ENCODE measurements at regions of chr5 and their contacts with region 1.

Region 1: DNA sequence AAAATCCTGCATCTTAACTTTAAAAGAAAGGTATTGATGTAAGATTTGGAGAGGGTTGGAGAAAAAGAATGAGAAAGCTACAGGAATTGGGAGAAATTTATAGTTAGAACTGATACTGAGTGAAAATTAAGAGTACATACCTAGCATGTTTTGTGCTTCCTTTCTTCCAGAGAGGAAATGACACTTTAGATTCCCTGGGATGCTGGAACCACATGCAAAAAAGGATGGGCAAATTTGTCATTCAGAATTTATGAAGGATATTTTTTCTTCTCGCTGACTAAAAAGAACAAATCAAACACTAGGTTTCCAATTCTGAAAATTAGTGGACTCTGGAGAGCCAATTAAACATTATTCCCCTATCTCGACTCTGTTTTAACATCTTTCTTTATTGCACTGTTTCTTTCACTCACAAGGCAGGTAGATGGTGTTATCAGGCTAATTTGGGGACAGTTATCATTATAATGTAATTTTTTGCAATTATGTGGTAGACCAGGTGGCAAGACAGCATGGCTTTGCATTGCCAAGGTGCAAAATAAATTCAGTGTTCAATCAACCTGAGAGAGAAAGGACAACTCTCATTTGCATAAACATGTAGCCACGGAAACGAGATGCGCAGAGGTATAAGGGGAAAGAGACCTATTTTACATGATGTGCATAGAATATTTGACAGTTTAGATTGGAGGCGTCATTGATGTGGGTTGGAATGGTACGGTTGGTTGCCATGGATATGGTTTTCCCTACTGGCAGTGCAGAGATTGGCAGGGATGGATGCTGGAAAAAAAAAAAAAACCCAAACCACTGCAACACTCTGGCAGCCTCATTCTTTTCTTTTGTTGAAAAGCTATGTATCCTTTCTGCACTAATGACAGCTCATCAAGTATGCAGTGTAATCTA is 320.4 kb upstream of the CCNH start:
- DNase-seq: no peak
- ATAC-seq: no peak
- H3K4me3 ChIP-seq: no peak overlapping the region
- H3K27ac ChIP-seq: no peak overlapping the region
- H3K4me1 ChIP-seq: no peaks in the 10 kb centered on the region
- H3K27me3 ChIP-seq: no peaks in the 10 kb centered on the region
- CTCF ChIP-seq: no peak

Region 2: DNA sequence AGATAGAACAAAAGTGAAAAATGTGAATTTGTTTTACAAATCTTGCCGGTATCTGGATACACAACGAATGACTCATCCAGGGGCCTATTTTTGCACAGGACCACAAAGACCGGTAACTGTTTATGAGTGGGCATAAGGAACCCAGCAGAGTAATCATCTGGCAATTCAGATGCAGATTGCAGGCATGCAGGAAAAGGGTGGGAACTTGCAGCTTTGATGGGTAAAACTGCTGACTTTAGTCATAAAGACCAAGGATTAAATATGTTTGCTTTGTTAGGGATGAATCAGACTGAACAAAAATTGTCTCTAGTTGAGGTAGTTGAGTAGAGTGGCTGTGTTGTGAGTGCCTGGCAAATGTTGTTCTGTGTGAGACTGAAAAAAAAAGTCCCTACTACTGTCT is 10.8 kb before region 1 on chr5:
- CTCF ChIA-PET with region 1: no interaction called
- POLR2A ChIA-PET with region 1: interaction called, 13 read pairs
- intact Hi-C with region 1: no loop called
- DNase-seq: peak; percentile 90
- ATAC-seq: peak; percentile 96
- H3K4me3 ChIP-seq: no peak overlapping the region
- H3K27ac ChIP-seq: peak overlapping the region; percentile 48
- H3K4me1 ChIP-seq: peaks cover 13% of the 10 kb centered on the region
- H3K27me3 ChIP-seq: no peaks in the 10 kb centered on the region
- CTCF ChIP-seq: no peak

Measured in PC-3 (cell line).